AG04449 (cell line): ENCODE measurements at regions of chr2 and their contacts with region 1.

Region 1: GRCh38 chr2:219543601-219544358 is at the starts of genes CHPF and TMEM198:
- DNase-seq: peak; percentile 87
- H3K4me3 ChIP-seq: peak within 1 kb of the TSS; percentile 80
- CTCF ChIP-seq: no peak

Region 2: DNA sequence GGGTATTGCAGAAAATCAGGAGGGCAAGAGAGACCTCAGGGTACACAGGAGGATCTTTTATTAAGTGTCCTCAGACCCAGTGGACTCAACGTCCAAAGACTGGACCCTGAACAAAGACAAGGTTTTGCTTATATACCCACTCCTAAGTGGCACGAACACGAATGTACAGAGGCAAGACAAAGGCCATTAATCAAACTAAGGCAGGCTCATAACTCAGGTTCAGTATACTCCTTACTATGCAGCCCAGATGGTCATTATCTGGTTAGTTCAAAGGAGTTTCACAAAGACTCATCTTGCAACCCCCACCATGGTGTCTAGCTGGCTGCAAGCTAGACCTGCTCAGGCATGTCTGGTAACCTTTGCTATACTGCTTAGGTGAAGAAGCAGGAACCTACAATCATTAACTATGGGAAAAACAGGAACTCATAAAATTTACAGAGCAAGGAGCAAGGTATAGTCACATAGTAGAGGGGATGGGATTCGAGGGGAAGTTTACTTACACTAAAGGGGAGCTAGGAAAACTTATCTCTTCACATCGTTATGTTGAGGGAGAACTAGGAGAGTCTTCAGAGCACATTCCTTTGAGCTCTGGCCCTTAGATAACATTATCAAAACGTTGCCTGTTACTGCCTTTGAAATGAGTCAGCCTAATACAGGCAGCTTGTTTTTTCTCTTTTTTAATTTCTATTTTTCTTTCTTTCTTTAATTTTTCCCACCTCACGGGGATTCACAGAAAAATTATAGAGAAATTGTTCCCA is 117.6 kb after region 1 on chr2:
- CTCF ChIA-PET with region 1: interaction called, 11 read pairs
- POLR2A ChIA-PET with region 1: no interaction called
- DNase-seq: no peak
- H3K4me3 ChIP-seq: no peak overlapping the region
- CTCF ChIP-seq: no peak

Region 3: GRCh38 chr2:219997341-219997851 is 453.6 kb after region 1 on chr2:
- CTCF ChIA-PET with region 1: no interaction called
- POLR2A ChIA-PET with region 1: no interaction called
- DNase-seq: no peak
- H3K4me3 ChIP-seq: no peak overlapping the region
- CTCF ChIP-seq: peak; percentile 48